ENCODE measurements at regions of chr14 and their contacts with region 1.

Region 1: GRCh38 chr14:74478996-74479635 is 14.0 kb downstream of the NPC2 start:
- DNase-seq: peak; percentile 30
- H3K4me3 Mint-ChIP-seq: no peak overlapping the region
- H3K27ac Mint-ChIP-seq: no peak overlapping the region
- H3K4me1 Mint-ChIP-seq: no peaks in the 10 kb centered on the region
- H3K27me3 Mint-ChIP-seq: no peaks in the 10 kb centered on the region
- CTCF ChIP-seq: peak; percentile 68

Region 2: DNA sequence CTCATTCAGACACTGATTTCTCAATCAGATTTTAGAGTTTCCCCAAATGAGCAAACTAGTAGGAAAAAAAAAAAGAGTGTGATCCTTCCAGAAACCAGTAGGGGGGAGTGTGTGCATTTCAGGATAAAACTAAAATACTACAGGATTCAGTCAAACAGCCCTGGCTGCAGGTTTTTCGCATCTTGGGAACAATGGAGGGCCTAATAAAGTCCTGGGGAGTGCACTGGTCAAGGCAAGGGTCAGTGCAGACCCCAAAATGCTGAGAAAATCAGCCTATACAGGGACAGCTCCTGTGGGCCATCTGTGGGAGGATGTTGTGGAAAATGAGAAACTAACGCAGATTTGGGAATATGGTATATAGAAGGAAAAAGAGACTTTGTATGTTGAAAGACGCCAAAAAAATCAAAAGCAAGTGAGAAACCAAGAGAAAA is 154.2 kb before region 1 on chr14:
- CTCF ChIA-PET with region 1: interaction called, 3 read pairs
- POLR2A ChIA-PET with region 1: no interaction called
- intact Hi-C with region 1: loop called (anchors 1 kb)
- DNase-seq: peak; percentile 52
- H3K4me3 Mint-ChIP-seq: no peak overlapping the region
- H3K27ac Mint-ChIP-seq: no peak overlapping the region
- H3K4me1 Mint-ChIP-seq: no peaks in the 10 kb centered on the region
- H3K27me3 Mint-ChIP-seq: peaks cover 37% of the 10 kb centered on the region
- CTCF ChIP-seq: peak; percentile 70

Region 3: DNA sequence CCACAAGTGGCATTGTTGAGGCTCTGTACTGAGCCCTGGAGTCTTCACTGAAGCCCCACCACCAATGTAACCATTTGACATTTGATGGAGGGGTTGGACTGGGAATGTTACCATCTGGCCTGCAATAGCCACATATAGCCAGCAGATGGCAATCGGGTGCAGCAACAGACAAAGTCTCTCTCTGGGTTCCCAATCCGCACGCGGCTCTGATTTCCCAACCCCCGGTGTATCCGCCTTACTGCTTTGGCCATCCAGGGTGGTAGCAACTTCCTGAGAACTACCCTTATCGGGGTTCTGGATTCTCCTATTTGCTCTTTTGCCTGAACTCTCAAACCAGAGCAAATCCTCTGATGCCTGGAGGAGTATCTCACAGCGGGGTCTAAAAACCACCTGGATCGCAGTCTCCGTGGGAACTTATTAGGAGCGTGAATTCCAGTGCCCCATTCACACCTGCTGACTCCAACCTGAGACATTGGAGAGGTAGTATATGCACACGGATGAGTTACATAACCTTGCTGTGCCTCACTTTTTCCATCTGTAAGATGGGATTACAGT is 116.7 kb before region 1 on chr14:
- CTCF ChIA-PET with region 1: interaction called, 15 read pairs
- POLR2A ChIA-PET with region 1: no interaction called
- intact Hi-C with region 1: loop called (anchors 1 kb)
- DNase-seq: peak; percentile 84
- H3K4me3 Mint-ChIP-seq: no peak overlapping the region
- H3K27ac Mint-ChIP-seq: no peak overlapping the region
- H3K4me1 Mint-ChIP-seq: no peaks in the 10 kb centered on the region
- H3K27me3 Mint-ChIP-seq: peaks cover 23% of the 10 kb centered on the region
- CTCF ChIP-seq: peak; percentile 82

Region 4: DNA sequence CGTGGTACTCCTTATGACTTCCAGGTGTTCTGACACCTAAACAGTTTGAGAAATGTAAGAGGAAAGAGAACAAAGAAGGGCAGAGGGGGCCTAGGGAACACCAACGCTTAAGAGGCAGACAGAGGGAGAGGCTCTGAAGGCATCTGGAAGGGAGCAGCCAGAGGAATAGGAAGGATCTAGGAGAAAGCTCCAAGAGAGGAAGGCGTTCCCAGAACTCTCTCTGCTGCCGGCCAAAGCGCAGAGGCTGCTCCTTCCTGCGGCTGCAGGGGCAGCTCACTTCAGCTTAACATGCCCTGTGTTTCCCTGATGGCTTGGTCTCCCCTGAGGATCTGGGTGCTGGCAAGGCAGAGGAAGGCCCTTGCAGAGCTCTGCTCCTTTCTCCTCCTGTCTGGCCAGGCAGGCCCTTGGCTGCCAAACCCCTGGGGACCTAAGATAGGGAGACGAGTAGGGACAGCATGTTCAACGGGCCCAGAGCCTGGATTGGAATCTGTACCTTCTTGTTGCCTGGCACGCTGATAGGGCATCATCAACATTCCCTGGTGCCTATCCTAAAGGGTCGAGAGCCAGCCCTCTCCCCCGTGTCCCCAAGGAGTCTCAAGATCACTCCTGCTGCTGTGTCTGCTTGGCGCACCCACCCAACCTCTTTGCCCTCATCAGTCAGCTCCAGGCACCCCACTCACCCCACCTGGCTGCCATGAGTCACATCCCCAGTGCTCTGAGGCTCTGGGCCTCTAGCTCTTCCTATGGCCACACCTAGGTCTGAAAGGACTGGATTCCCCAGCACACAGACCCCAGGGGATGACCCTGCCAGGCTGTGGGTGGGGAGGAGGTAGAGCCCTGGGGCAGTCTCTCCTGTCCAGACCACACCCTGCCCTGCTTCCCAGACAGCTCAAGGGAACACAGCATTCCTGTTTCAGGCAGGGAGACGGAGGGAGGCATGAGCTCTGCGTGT is 87.3 kb after region 1 on chr14:
- CTCF ChIA-PET with region 1: no interaction called
- POLR2A ChIA-PET with region 1: no interaction called
- intact Hi-C with region 1: no loop called
- DNase-seq: peak; percentile 96
- H3K4me3 Mint-ChIP-seq: peak overlapping the region; percentile 56
- H3K27ac Mint-ChIP-seq: peak overlapping the region; percentile 92
- H3K4me1 Mint-ChIP-seq: peaks cover 69% of the 10 kb centered on the region
- H3K27me3 Mint-ChIP-seq: no peaks in the 10 kb centered on the region
- CTCF ChIP-seq: no peak

Measured in MCF 10A (cell line).